Caki2 (cell line): ENCODE measurements at regions of chr6 and their contacts with region 1.

Region 1: GRCh38 chr6:116764961-116765851 is at the start of gene FAM162B:
- DNase-seq: no peak
- total RNA-seq, gene FAM162B: not detected in 2 replicates

Region 2: DNA sequence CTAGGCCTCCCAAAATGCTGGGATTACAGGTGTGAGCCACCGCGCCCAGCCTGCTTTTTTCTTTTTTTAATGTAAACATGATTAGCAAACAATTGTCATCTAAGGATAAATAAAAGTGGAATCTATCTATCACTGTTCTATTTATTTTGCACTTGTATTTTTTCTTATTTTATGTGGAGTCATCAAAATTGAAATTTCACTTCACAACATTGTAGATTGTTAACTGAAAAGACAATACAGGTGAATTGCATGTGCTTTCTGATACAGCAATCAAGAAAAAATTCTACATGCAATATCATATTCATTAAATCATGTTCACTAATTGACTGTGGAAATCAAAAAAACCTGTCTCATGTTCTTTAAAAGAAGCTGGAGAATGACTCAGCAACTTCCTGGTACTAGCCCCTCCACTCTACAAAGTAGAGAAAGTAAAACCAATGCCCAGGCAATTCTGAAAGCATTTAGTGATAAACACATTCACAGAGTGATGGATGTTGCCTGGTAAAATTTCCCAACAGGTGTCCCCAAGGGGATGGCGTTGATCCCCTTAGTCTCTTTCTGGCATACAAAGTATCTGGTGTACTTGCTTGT is 101.2 kb after region 1 on chr6:
- in situ Hi-C with region 1: loop called (anchors 25 kb)
- DNase-seq: no peak